Common myeloid progenitor, CD34-positive (primary cell): ENCODE measurements at regions of chr14 and their contacts with region 1.

Region 1: GRCh38 chr14:100654814-100655740 is 67.9 kb upstream of the BEGAIN start:
- DNase-seq: peak in 2 of 3 donors; percentile 47 to 51
- H3K4me3 ChIP-seq: peak overlapping the region in 1 of 7 experiments; percentile 19
- H3K27ac ChIP-seq: no peak overlapping the region
- H3K4me1 ChIP-seq: peaks cover 0 to 8% (median 2%) of the 10 kb centered on the region in 4 experiments
- H3K27me3 ChIP-seq: peaks cover 0 to 20% (median 0%) of the 10 kb centered on the region in 5 experiments

Region 2: GRCh38 chr14:100440187-100440631 is 214.9 kb before region 1 on chr14:
- CTCF ChIA-PET with region 1: interaction called, 81 read pairs
- POLR2A ChIA-PET with region 1: no interaction called
- DNase-seq: peak; percentile 23 to 79 (median 74)
- H3K4me3 ChIP-seq: no peak overlapping the region
- H3K27ac ChIP-seq: no peak overlapping the region
- H3K4me1 ChIP-seq: peaks cover 0 to 30% (median 14%) of the 10 kb centered on the region in 4 experiments
- H3K27me3 ChIP-seq: no peaks in the 10 kb centered on the region

Region 3: DNA sequence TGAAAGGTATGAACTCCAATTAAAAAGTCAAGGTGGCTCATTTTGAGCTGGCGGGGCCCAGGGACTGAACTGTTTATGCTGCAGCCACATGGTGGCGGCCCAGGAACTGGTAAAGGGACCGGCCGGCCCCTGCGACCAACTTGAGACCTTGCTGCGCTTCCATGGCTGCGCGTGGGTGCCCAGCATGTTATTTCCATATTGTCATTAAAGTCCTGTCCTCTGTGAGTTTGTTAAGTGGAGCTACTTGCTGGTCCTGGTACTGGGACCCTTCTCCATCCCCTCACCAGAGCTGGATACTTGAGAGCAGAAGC is 130.2 kb before region 1 on chr14:
- CTCF ChIA-PET with region 1: interaction called, 14 read pairs
- POLR2A ChIA-PET with region 1: no interaction called
- DNase-seq: peak in 2 of 3 donors; percentile 39 to 51
- H3K4me3 ChIP-seq: no peak overlapping the region
- H3K27ac ChIP-seq: no peak overlapping the region
- H3K4me1 ChIP-seq: peaks cover 0 to 6% (median 2%) of the 10 kb centered on the region in 4 experiments
- H3K27me3 ChIP-seq: no peaks in the 10 kb centered on the region